Activated CD4-positive, alpha-beta T cell treated with anti-CD3 and anti-CD28 coated beads, Interleukin-2, amount 10 ng/mL, durations not matched to agents 24 days and 14 days (primary cell): ENCODE measurements at regions of chr5 and their contacts with region 1.

Region 1: DNA sequence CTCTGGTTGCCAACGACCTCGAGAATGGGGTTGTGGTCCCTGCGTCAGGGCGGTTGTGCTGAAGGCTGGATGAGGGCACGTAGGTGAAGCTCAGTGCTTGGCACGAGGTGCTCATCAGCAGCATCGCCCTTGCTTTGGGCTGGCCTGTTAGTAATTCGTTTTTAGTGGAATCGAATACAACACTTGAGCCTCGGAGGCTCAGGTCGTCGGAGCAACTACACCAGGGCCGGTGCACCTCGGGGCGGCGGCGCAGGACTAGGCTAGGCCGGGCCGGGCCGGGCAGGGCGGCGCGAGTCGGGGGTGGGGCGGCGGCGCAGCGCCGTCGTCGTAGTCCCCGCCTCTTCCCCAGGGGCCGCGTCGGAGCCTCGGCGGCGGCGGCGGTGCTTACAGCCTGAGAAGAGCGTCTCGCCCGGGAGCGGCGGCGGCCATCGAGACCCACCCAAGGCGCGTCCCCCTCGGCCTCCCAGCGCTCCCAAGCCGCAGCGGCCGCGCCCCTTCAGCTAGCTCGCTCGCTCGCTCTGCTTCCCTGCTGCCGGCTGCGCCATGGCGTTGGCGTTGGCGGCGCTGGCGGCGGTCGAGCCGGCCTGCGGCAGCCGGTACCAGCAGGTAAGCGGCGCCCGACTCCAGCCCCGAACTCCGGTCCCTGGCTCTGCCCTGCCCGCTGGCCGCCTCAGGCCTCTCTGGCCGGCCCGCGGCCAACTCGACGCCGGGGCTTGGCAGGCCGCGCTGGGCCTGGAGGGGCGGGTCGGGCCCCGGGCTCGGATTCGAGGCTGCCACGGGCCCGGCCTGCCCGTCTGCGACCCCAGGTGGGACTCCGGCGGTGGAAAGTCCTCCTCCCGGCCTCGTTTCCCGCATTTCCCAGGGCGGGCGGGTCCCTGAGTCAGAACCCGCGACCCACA is at the start of gene NDFIP1:
- DNase-seq: peak; percentile 96
- H3K4me3 Mint-ChIP-seq: peak within 1 kb of the TSS; percentile 93
- H3K27ac Mint-ChIP-seq: peak within 1 kb of the TSS; percentile 97
- H3K4me1 Mint-ChIP-seq: peaks cover 55% of the 10 kb centered on the region
- H3K27me3 Mint-ChIP-seq: no peaks in the 10 kb centered on the region
- total RNA-seq, gene NDFIP1: 114 and 122 TPM in 2 replicates

Region 2: GRCh38 chr5:141771031-141771430 is 337.6 kb before region 1 on chr5:
- intact Hi-C with region 1: no loop called
- DNase-seq: no peak
- H3K4me3 Mint-ChIP-seq: no peak overlapping the region
- H3K27ac Mint-ChIP-seq: no peak overlapping the region
- H3K4me1 Mint-ChIP-seq: no peaks in the 10 kb centered on the region
- H3K27me3 Mint-ChIP-seq: peaks cover 4% of the 10 kb centered on the region

Region 3: DNA sequence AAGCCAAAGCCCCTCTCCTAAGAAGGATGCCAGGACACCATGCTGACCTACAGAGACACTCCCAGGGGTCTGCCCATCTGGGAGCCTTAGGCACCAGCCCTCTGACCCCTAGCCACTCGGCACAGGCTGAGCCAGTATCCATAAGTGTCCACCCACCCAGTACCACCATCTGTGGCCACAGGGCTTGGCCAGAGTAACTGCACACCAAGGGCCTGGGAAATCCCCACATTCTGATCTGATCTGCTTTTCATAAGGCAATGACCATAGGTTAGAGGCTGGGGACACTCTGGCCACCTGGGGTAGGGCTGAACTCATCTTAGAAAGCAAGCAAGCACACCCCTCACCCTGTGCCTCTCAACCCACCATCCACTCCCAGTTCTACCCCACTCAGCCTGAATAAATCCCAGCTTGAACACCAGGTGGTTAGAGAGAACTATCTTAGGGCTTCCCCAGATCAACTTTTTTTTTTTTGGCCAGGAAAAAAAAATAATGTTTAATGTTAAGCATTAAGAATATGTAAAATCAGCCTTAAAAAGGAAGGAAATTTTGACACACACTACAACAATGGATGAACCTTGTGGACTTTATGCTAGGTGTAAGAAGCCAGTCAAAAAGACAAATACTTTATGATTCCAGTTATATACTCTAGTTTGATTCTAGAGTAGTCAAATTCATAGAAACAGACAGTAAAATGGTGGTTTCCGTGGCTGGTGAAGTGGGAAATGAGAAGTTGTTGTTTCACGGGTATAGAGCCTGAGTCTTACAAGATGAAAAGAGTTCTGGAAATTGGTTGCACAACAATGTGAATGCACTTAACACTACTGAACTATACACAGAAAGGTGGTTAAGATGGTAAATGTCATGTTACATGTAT is 102.1 kb before region 1 on chr5:
- intact Hi-C with region 1: loop called (anchors 2 kb)
- DNase-seq: peak; percentile 86
- H3K4me3 Mint-ChIP-seq: peak overlapping the region; percentile 80
- H3K27ac Mint-ChIP-seq: peak overlapping the region; percentile 96
- H3K4me1 Mint-ChIP-seq: peaks cover 69% of the 10 kb centered on the region
- H3K27me3 Mint-ChIP-seq: no peaks in the 10 kb centered on the region

Region 4: DNA sequence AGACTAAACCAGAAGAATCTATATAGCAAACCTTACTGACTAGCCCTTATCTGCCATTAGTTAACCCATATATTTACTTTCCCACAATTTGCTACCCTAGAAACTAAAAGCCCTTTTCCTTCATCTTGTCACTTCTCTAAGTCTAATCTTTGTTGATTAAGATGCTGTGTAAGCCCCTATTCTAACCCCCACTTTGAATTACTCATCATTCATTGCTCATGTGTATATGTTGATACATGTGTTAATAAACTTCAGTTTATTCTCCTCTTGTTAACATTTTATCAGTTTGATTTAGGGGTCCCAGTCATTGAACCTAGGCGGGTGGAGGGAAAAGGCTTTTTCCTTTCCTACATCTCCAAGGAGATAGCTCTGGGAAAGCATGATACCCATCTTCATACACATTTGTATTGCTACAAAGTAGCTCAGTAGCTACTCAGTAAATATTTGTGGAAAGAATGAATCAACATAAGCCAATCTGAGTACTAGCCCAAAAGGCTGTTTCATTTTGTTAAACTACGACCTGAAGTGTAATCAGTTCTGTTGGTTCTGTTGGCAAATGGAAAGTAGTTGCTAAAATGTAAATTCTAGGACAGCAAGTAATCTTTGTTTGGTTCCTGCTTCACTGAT is 35.2 kb before region 1 on chr5:
- intact Hi-C with region 1: loop called (anchors 2 kb)
- DNase-seq: no peak
- H3K4me3 Mint-ChIP-seq: no peak overlapping the region
- H3K27ac Mint-ChIP-seq: peak overlapping the region; percentile 89
- H3K4me1 Mint-ChIP-seq: peaks cover 31% of the 10 kb centered on the region
- H3K27me3 Mint-ChIP-seq: no peaks in the 10 kb centered on the region

Region 5: GRCh38 chr5:142119051-142119625 is 10.5 kb after region 1 on chr5:
- intact Hi-C with region 1: loop called (anchors 1 kb)
- DNase-seq: no peak
- H3K4me3 Mint-ChIP-seq: no peak overlapping the region
- H3K27ac Mint-ChIP-seq: peak overlapping the region; percentile 3
- H3K4me1 Mint-ChIP-seq: peaks cover 57% of the 10 kb centered on the region
- H3K27me3 Mint-ChIP-seq: no peaks in the 10 kb centered on the region

Region 6: GRCh38 chr5:142145106-142145900 is 36.6 kb after region 1 on chr5:
- intact Hi-C with region 1: loop called (anchors 2 kb)
- DNase-seq: peak; percentile 89
- H3K4me3 Mint-ChIP-seq: no peak overlapping the region
- H3K27ac Mint-ChIP-seq: no peak overlapping the region
- H3K4me1 Mint-ChIP-seq: no peaks in the 10 kb centered on the region
- H3K27me3 Mint-ChIP-seq: no peaks in the 10 kb centered on the region